PC-9 (cell line): ENCODE measurements at regions of chr6 and their contacts with region 1.

Region 1: DNA sequence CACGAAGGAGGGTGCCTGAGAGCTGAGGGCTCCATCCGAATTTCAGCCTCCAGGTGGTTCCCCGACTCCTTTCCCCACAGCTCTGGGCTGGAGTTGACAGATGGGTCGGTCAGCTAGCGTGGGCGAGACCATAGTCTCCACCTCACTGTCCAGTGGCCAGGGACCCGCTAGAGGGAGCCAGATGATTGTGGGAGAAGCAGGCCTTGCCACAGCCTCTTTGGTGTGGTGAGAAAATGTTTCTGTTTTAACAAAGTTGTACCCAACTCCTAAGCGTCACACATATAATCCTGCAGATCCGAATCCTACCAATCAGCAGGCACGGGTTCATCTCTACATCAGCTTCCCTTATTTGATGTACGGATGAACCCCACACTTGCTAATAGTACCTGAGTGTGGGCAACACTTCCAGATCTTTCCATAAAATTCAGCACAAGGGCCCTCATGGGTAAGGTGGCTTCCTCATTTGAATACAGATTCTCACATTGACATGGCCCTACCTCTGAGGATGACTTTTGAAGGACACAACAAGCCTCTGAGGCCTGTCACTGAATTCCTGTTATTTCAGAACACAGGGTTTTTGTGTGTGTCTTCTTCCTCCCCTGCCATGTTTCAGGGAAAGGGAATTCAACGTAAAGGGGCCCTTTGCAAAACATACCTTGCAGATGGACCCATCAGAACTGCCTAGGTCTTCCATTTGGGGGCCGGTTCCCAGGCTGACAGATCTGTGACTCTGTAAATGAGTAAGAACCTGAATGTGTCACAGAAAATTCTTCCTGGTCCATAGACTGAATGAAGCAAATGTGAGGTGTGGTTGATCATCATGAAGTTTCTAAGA is 103.2 kb upstream of the DUSP22 start:
- DNase-seq: peak; percentile 69 to 86
- H3K4me3 ChIP-seq: no peak overlapping the region
- H3K27ac ChIP-seq: no peak overlapping the region
- H3K4me1 ChIP-seq: no peaks in the 10 kb centered on the region
- H3K27me3 ChIP-seq: peaks cover 12% of the 10 kb centered on the region; the same call in 1 of the 2 replicates
- CTCF ChIP-seq: peak; percentile 75

Region 2: DNA sequence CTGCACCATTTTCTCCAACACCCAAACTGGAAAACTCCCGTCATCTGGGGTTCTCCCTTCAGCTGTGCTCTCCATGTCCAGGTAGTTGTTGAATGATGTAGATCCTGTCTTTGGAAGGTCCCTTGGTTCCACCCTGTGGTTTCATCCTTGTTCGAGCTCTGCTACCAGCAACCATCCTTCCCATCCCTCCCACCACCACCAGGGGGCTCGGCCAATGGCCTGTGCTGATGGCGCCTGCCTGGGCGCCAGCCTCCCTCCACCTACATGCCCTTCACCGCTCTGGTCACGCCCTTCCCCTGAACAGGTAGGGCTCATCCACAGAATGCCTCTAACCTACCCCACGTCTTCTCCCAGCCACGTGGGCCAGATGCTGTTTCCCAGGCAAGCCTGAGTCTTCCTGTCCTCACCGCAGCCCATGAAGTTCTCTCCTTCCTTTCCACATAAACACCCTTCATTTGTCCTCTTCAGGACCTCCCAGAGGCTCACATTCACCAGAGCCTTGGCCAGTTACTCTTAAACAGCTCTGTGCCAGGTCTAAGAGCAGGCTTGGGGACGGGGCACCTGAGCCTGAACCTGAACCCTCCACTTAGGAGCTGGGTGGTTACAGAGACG is 28.1 kb after region 1 on chr6:
- CTCF ChIA-PET with region 1: no interaction called
- POLR2A ChIA-PET with region 1: no interaction called
- intact Hi-C with region 1: no loop called
- DNase-seq: peak in 1 of 2 experiments; percentile 5
- H3K4me3 ChIP-seq: no peak overlapping the region
- H3K27ac ChIP-seq: no peak overlapping the region
- H3K4me1 ChIP-seq: no peaks in the 10 kb centered on the region
- H3K27me3 ChIP-seq: peaks cover 5% of the 10 kb centered on the region; the same call in 1 of the 2 replicates
- CTCF ChIP-seq: peak; percentile 45

Region 3: DNA sequence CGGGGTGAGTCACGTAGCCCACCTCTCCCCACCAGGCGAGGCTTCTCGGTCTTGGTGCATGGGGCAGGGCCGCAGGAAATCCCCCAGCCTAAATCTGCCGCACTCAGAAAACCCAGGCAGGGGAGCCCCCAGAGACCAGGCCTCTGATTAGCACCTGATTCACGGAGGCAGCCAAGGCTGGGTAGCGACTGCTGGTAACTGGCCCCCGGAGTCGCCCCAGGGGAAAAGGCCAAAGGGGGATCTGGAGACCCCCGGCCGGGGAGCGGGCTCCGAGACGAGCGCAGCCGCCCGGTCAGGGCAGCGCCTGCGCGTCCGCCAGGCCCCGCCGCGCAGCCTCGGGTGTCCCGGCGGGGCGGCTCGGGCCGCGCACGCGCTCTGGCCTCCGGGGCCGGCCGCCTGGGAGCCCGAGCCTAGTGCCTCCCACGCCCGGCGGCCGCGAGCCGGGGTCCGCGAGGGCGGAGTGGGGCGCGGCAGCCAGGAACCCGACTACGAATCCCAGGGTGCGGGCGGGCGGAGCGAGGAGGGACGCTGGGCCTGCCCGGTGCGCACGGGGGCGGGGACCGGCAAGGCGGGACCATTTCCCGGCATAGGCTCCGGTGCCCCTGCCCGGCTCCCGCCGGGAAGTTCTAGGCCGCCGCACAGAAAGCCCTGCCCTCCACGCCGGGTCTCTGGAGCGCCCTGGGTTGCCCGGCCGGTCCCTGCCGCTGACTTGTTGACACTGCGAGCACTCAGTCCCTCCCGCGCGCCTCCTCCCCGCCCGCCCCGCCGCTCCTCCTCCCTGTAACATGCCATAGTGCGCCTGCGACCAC is 102.9 kb after region 1 on chr6 and contains the start of gene DUSP22:
- CTCF ChIA-PET with region 1: no interaction called
- POLR2A ChIA-PET with region 1: no interaction called
- intact Hi-C with region 1: loop called (anchors 2 kb)
- DNase-seq: peak; percentile 58 to 88
- H3K4me3 ChIP-seq: peak within 1 kb of the TSS; percentile 57
- H3K27ac ChIP-seq: peak within 1 kb of the TSS; percentile 23
- H3K4me1 ChIP-seq: no peaks in the 10 kb centered on the region; the same call in 1 of the 2 replicates
- H3K27me3 ChIP-seq: peaks cover 55% of the 10 kb centered on the region
- CTCF ChIP-seq: no peak
- total RNA-seq, gene DUSP22: 23.7 and 25.5 TPM in 2 replicates

Region 4: DNA sequence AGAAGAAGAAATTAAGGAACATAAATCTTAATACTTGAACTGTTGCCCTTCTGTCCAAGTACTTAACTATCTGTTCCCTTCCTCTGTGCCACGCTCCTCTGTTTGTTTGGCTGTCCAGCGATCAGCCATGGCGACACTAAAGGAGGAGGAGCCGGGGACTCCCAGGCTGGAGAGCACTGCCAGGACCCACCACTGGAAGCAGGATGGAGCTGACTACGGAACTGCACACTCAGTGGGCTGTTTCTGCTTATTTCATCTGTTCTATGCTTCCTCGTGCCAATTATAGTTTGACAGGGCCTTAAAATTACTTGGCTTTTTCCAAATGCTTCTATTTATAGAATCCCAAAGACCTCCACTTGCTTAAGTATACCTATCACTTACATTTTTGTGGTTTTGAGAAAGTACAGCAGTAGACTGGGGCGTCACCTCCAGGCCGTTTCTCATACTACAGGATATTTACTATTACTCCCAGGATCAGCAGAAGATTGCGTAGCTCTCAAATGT is 219.6 kb after region 1 on chr6:
- CTCF ChIA-PET with region 1: no interaction called
- POLR2A ChIA-PET with region 1: no interaction called
- intact Hi-C with region 1: loop called (anchors 5 kb)
- DNase-seq: peak in 1 of 2 experiments; percentile 30
- H3K4me3 ChIP-seq: no peak overlapping the region
- H3K27ac ChIP-seq: no peak overlapping the region
- H3K4me1 ChIP-seq: no peaks in the 10 kb centered on the region
- H3K27me3 ChIP-seq: peaks cover 91% of the 10 kb centered on the region
- CTCF ChIP-seq: peak; percentile 44

Region 5: GRCh38 chr6:593139-593906 is 404.3 kb after region 1 on chr6:
- CTCF ChIA-PET with region 1: interaction called, 7 read pairs
- POLR2A ChIA-PET with region 1: no interaction called
- intact Hi-C with region 1: loop called (anchors 5 kb)
- DNase-seq: peak; percentile 31 to 48
- H3K4me3 ChIP-seq: no peak overlapping the region
- H3K27ac ChIP-seq: no peak overlapping the region
- H3K4me1 ChIP-seq: no peaks in the 10 kb centered on the region
- H3K27me3 ChIP-seq: no peaks in the 10 kb centered on the region
- CTCF ChIP-seq: peak; percentile 68

Region 6: DNA sequence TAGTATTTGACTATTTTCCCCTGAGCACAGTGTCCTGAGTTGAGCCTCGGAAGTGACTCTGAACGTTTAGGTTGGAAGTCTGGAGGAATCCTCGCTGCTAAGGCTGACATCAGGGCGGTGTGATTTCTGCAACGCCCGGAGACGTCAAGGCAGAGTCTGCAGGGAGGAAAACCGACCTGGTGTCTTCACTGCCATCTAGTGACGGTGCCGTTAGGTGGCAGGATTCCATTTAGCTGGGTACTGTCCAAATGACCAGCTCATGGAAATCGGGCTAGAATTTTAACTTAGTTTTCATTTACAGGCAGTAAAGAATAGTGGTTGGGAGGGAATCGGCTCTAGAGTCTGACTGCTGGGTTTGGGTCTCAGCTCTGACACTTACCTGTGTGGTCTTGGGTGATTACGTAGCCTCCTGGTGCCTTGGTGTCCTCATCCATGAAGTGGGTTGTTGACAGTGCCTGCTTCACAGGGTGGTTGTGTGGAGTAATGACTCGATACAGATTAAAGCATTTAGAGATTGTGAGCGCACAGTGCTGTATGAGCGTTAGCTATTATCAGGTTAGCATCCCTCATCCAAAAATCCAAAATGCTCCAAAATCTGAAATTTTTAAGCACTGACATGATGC is 1235.4 kb after region 1 on chr6:
- CTCF ChIA-PET with region 1: no interaction called
- POLR2A ChIA-PET with region 1: no interaction called
- intact Hi-C with region 1: loop called (anchors 2 kb)
- DNase-seq: peak in 1 of 2 experiments; percentile 45
- H3K4me3 ChIP-seq: no peak overlapping the region
- H3K27ac ChIP-seq: no peak overlapping the region
- H3K4me1 ChIP-seq: no peaks in the 10 kb centered on the region
- H3K27me3 ChIP-seq: 0 out of 2 replicates have a peak, but pooled peaks cover 8% of the 10 kb centered on the region
- CTCF ChIP-seq: peak; percentile 68

Region 7: DNA sequence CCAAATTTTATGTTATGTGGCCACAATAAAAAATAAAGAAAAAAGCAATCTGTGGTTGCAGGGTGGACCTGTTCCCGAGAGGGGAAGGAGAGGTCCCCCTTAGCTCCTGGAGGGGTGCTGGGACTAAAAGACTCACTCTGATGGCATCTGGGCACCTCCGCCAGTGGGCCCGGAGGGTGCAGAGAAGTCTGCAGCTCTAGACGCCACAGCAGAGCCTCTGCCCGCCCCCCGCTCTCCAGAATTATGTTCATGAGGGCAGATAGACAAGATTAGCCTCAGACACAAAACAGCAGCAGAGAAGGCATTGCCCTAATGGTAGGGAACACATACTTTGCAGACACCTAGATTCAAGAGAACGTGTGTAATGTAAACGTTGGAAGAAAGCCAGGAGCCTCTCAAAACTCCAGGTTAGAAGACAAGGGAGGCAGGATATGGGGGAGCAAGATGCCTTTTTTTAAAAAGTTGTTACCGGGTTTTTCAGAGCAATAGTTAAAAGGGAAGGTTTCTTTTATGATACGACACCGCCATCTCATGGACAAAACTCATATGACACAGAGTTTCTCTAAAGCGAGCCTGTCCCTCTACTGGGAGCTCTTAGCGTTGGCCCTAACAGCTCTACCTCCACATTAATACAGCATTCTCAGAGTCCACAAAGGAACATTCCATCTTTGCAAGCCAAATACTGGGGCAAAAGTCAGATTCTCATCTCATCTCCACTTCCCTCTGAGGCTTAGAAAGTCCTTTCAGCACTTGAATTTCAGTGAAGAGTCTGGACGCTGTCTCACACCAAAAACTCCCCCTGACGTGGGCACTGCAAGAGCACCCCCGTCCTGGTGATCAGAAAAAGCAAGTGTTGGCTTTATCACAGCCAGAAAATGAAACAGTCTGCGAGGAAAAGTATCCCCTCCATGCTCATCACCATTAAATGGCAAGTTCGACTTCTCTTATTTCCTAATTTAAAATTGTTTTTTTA is 1247.6 kb after region 1 on chr6:
- CTCF ChIA-PET with region 1: no interaction called
- POLR2A ChIA-PET with region 1: no interaction called
- intact Hi-C with region 1: loop called (anchors 2 kb)
- DNase-seq: peak; percentile 52 to 57
- H3K4me3 ChIP-seq: no peak overlapping the region
- H3K27ac ChIP-seq: no peak overlapping the region
- H3K4me1 ChIP-seq: no peaks in the 10 kb centered on the region
- H3K27me3 ChIP-seq: no peaks in the 10 kb centered on the region
- CTCF ChIP-seq: peak; percentile 73